Panc1 (cell line): ENCODE measurements at regions of chr15 and their contacts with region 1.

Region 1: GRCh38 chr15:90654233-90655124 is 62.7 kb upstream of the BLM start:
- DNase-seq: no peak
- ATAC-seq: no peak
- H3K4me3 ChIP-seq: no peak overlapping the region
- H3K27ac ChIP-seq: no peak overlapping the region
- H3K4me1 ChIP-seq: no peaks in the 10 kb centered on the region
- H3K27me3 ChIP-seq: peaks cover 3% of the 10 kb centered on the region; the same call in 1 of the 2 replicates
- CTCF ChIP-seq: no peak

Region 2: GRCh38 chr15:90718232-90718631 is 63.8 kb after region 1 on chr15:
- CTCF ChIA-PET with region 1: no interaction called
- POLR2A ChIA-PET with region 1: interaction called, 13 read pairs
- in situ Hi-C with region 1: no loop called
- intact Hi-C with region 1: no loop called
- DNase-seq: no peak
- ATAC-seq: no peak
- H3K4me3 ChIP-seq: peak overlapping the region; percentile 90 to 99
- H3K27ac ChIP-seq: peak overlapping the region; percentile 87
- H3K4me1 ChIP-seq: peaks cover 8% of the 10 kb centered on the region; the same call in 1 of the 2 replicates
- H3K27me3 ChIP-seq: no peaks in the 10 kb centered on the region
- CTCF ChIP-seq: no peak